CD8-positive, alpha-beta T cell (primary cell): ENCODE measurements at regions of chr19 and their contacts with region 1.

Region 1: GRCh38 chr19:57583521-57584416 is at the start of gene ZIK1:
- DNase-seq: peak; percentile 75 to 95 (median 88)
- ATAC-seq: peak; percentile 87
- H3K4me3 ChIP-seq: peak within 1 kb of the TSS; percentile 59 to 67
- H3K4me3 Mint-ChIP-seq: peak within 1 kb of the TSS; percentile 98
- H3K27ac ChIP-seq: peak within 1 kb of the TSS; percentile 37 to 56
- H3K27ac Mint-ChIP-seq: peak within 1 kb of the TSS; percentile 91
- H3K4me1 ChIP-seq: peaks cover 21% of the 10 kb centered on the region
- H3K4me1 Mint-ChIP-seq: peaks cover 19% of the 10 kb centered on the region
- H3K27me3 ChIP-seq: no peaks in the 10 kb centered on the region
- H3K27me3 Mint-ChIP-seq: no peaks in the 10 kb centered on the region
- CTCF ChIP-seq: peak; percentile 12
- total RNA-seq, gene ZIK1: 10.0 to 12.8 TPM

Region 2: DNA sequence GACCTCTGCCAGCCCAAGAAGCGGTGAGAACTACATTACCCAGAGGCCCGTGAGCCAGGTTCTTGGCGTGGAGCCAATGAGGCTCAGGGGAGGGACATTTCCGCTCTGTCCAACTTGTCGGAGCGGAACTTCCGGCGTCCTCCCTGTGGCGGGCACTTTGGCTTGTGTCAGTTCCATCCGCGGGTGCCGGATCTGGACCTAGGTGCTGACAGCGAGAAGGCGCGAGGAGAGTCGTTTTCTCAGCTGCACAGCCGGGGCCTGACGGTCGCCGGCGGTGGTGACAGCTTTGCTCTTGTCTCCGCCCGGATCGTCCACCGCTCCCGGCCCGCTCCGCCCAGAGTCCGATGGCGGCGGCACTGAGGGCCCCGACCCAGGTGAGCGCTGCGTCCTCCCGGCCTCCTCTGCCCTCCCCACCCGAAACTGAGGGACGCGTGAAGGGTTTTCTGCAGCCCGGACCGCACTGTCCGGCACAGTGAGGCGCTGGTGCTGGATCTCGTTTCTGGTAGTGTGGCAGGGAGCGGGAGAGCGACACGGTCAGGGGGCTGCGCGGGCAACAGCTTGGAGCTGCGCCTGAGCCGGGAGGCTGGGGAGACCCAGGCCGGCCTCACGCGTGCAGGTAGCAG is 16.1 kb after region 1 on chr19 and contains the start of gene ZNF530:
- CTCF ChIA-PET with region 1: no interaction called
- POLR2A ChIA-PET with region 1: interaction called, 5 read pairs
- intact Hi-C with region 1: loop called (anchors 1 to 2 kb)
- DNase-seq: peak; percentile 61 to 93 (median 88)
- ATAC-seq: peak; percentile 86
- H3K4me3 ChIP-seq: peak within 1 kb of the TSS; percentile 67 to 81
- H3K4me3 Mint-ChIP-seq: peak within 1 kb of the TSS; percentile 88
- H3K27ac ChIP-seq: peak within 1 kb of the TSS; percentile 16 to 51
- H3K27ac Mint-ChIP-seq: peak within 1 kb of the TSS; percentile 33
- H3K4me1 ChIP-seq: peaks cover 13% of the 10 kb centered on the region
- H3K4me1 Mint-ChIP-seq: peaks cover 25% of the 10 kb centered on the region
- H3K27me3 ChIP-seq: no peaks in the 10 kb centered on the region
- H3K27me3 Mint-ChIP-seq: no peaks in the 10 kb centered on the region
- CTCF ChIP-seq: no peak
- total RNA-seq, gene ZNF530: 3.6 to 4.2 TPM

Region 3: DNA sequence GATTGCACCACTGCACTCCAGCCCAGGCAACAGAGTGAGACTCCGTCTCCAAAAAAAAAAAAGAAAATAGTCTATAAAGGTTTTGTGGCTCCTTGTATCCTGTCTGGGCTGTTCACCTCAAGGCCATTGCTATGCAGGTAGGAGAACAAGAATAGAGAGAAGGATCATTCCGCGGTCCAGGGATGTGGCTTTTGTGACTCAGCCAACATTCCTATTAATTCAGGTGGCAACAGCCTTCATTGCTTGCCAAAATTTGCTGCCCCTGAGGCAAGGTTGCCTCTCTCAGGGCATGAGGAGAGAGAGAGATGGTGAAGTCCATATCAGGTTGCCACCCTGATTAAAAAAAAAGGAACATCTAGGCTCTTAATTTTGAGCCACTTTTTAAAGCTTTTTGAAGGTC is 106.0 kb after region 1 on chr19:
- CTCF ChIA-PET with region 1: no interaction called
- POLR2A ChIA-PET with region 1: no interaction called
- intact Hi-C with region 1: no loop called
- DNase-seq: no peak
- ATAC-seq: no peak
- H3K4me3 ChIP-seq: no peak overlapping the region
- H3K4me3 Mint-ChIP-seq: no peak overlapping the region
- H3K27ac ChIP-seq: no peak overlapping the region
- H3K27ac Mint-ChIP-seq: no peak overlapping the region
- H3K4me1 ChIP-seq: no peaks in the 10 kb centered on the region
- H3K4me1 Mint-ChIP-seq: peaks cover 4% of the 10 kb centered on the region
- H3K27me3 ChIP-seq: no peaks in the 10 kb centered on the region
- H3K27me3 Mint-ChIP-seq: no peaks in the 10 kb centered on the region
- CTCF ChIP-seq: no peak

Region 4: GRCh38 chr19:57746580-57747471 is 163.1 kb after region 1 on chr19 and contains the start of gene ZNF776:
- CTCF ChIA-PET with region 1: no interaction called
- POLR2A ChIA-PET with region 1: no interaction called
- intact Hi-C with region 1: loop called in 1 of 2 experiments (anchors 1 kb)
- DNase-seq: peak; percentile 63 to 93 (median 84)
- ATAC-seq: peak; percentile 96
- H3K4me3 ChIP-seq: peak within 1 kb of the TSS; percentile 75 to 84
- H3K4me3 Mint-ChIP-seq: peak within 1 kb of the TSS; percentile 95
- H3K27ac ChIP-seq: peak within 1 kb of the TSS; percentile 71 to 80
- H3K27ac Mint-ChIP-seq: peak within 1 kb of the TSS; percentile 98
- H3K4me1 ChIP-seq: peaks cover 16% of the 10 kb centered on the region
- H3K4me1 Mint-ChIP-seq: peaks cover 41% of the 10 kb centered on the region
- H3K27me3 ChIP-seq: no peaks in the 10 kb centered on the region
- H3K27me3 Mint-ChIP-seq: no peaks in the 10 kb centered on the region
- CTCF ChIP-seq: no peak
- total RNA-seq, gene ZNF776: 22.3 to 32.3 TPM